ENCODE measurements at regions of chr1 and their contacts with region 1.

Region 1: DNA sequence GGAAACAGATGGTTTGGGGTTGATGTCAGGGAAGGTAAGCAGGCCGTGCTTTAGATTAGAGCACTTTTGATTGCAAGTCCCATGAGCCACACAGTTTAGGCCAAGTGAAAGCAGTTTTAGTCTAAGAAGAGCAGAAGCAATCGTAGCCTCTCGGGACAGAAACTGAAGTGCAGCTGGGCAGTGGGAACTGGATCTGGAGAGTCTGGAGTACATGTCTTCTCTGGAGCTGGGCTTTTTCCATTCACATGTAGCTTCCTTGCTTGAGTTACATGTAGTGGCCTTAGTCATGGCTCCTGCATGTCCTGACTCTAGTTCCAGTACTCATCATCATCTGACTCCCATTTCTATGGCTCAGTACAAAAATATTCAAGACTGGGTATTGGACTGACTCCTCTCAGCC is 16.7 kb downstream of the CAMTA1 start:
- DNase-seq: no peak

Region 2: DNA sequence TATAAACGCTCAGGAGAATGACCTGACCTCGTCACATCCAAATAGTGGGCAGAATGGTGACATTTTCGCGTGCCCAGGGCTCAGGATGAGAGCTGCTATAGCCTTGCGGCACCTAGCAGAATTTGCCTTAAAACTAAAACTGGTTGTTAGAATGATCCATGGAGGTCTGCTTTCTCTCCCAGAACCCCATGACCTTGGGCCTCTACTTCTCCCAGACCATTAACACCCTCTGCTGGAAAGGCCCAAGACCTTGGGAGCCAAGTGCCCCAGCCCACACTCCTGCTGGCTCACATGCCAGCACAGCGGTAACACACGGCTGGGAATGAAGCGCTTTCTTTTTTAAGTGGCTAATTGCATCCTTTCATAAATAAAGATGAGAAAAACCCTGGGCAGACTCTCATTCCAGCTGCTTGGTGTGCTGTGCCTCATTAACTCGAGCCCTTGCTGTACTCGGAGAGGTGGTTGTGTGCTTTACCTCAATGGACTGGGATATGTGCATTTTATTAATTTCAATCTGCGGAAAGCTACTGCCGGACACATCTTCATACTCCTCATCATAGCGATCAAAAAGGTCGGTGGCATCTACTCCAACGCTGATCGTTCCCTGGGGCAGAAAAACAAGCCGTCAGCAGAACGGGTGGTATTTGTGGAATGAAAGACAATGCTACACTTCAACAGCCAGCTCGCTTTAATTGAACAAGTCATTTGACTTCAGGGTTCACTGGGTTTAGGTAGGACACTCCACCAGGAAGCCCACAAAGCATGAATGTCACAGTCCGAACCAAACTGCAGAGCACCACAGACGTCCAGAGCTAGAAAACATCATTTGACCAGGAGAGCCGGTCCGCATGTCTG is 148.3 kb before region 1 on chr1:
- intact Hi-C with region 1: no loop called
- DNase-seq: no peak

Region 3: DNA sequence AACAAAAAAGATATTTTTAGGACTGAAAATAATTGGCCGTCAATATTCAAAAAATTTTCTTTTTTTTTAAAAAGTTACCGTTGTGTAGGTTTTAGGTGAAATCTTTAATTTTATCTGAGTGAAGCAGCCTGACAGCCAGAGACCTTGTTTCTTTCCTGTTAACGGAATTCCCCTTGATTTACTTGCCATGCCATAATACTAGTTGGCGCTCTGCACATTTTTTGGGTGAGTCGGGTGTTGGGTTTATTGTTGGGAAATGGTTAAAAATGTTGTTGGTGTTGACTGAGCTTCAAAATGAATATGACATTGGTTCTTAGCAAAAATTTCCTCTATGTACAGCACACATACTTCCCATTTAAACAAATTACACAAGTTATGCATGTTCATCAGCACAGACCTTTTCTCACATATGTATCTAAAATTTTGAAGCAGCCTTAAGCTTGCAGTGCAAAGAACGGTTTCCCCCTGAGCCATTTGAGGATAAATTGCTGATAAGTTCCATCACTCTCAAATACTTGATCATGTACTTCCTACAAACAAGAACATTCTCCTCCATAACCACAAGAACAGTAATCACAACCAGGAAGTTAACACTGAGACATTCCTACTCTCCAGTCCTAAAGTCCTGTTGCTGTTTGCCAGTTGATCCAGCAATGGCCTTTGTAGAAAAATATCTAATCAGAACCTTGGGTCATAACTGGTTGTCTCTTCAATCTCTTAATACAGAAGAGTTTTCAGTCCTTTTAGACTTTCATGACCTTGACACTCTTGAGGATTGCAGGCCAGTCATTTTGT is 17.5 kb after region 1 on chr1:
- intact Hi-C with region 1: loop called in 1 of 2 experiments (anchors 2 kb)
- DNase-seq: no peak

Region 4: GRCh38 chr1:6832531-6833188 is 30.7 kb after region 1 on chr1:
- intact Hi-C with region 1: no loop called
- DNase-seq: no peak

Region 5: DNA sequence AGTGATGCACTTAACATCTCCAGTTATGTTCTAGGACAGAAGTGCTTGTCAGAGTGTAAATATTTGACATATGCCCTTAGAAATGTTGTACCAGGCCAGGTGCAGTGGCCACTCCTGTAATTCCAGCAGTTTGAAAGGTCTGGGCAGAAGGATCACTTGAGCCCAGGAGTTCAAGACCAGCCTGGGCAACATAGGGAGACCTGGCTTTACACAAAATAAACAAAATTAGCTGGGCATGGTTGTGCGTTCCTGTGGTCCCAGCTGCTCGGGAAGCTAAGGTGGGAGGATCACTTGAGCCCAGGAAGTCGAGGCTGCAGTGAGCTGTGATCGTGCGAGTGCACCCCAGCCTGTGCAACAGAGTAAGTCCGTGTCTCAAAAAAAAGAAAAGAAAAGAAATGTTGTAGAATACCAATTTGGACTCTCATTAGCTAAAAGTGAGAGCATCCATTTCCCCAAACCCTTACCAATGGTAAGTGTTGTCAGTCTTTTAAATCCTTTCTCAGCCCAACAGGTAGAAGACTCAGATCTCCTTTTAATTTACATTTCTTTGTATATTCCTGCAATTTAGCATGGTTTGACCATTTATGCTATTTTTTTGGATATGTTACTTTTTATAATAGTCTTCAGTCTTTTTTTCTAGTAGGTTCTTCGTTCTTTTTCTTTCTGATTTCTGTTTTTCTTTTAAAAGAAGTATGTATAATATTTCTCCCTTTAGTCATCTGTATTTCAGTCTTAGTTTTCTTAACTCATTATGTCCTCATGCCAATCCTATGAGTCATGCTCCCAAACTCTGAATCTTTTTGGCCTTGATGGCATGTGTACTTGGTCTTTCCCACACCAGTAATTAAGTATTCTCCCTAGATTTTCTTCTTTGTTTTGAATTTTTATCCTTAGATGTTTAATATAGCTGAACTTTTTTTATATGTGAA is 57.7 kb after region 1 on chr1:
- intact Hi-C with region 1: no loop called
- DNase-seq: no peak